GM10248 (cell line): ENCODE measurements at regions of chr13 and their contacts with region 1.

Region 1: DNA sequence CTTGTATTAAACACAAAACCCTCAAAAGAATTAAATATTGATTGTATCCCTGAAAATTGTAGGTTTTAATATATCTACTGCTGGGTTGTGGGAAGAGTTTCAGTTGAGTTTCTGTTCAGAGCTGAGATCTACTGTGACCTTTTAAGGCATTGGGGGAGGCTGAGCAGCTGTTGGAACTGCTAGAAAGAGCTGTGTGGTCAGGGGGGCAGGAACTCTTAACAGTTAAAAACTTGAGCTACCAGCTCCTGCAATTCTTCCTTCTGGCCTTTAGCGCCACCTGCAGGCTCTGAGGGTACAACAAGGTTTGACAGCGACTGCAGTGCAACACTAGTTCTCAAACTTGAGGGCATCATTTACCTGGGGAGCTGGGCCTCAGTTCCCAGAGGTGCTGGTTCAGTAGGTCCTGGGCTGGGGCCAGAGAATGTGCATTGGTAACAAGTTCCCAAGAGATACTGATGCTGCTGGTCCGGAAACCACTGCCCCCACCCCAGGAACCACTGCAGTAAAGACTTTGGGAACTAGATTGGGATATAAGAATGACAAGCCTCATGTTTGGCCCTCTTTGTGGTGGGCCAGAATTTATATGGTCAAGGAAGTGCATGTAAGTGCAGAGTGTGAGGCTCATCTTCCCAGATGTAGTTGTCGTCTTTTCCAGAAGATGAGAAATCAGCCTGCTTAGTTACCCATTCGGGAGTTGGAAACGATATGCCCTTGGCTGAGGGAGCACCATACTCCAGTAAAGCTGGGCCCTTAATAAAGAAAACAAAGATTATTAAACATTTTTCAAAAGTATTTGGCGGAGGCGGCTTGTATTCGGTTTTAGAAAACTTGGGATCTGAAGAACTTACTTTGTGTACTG is 2.6 kb downstream of the RNASEH2B start:
- DNase-seq: peak; percentile 79
- CTCF ChIP-seq: peak; percentile 84

Region 2: DNA sequence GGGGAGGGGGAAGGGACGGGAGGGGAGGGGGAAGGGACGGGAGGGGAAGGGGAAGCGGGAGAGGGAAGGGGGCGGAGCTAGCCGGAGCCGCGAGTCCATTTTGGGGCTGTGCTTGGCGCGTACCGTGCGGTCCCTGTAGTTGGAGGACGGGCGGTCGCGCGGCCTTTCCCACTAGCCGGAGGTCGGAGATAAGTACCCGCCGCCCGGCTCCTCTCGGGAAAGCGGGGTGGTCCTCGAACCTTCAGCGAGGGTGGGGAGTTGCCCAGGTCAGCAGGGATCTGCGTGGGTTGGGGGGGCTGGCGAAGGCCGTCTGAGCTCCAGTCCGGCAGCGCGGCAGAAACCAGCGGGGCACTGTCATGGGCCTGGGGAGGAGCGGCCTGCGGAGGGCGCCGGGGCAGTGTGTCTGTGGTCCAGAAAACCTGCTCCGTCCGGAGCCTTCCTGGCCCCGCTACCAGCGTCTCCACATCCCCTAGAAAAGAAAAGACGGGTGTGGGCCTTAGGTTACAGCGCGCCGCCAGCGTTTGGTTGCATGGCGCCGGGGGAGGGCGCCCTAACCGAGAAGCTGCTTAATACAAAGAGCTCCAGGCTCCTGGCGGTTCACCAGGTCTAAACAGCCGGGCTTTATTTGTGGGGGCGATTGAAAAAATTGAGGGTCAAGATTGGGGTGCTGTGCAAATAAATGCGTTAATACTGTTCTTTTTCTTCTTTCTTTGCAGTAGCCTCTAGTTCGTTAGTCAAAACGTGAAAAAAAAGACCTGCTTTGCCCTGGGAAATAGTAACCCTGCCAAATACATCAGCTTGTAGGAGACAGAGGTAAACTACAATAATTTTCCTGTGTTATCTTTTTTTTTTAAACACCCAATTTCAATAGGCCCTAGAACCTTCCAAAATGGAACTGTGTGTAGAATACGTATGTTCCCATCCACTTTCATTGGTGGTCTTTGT is 914.9 kb before region 1 on chr13 and contains the start of gene TRIM13:
- CTCF ChIA-PET with region 1: interaction called, 12 read pairs
- POLR2A ChIA-PET with region 1: interaction called, 6 read pairs
- DNase-seq: peak; percentile 76
- CTCF ChIP-seq: peak; percentile 76

Region 3: DNA sequence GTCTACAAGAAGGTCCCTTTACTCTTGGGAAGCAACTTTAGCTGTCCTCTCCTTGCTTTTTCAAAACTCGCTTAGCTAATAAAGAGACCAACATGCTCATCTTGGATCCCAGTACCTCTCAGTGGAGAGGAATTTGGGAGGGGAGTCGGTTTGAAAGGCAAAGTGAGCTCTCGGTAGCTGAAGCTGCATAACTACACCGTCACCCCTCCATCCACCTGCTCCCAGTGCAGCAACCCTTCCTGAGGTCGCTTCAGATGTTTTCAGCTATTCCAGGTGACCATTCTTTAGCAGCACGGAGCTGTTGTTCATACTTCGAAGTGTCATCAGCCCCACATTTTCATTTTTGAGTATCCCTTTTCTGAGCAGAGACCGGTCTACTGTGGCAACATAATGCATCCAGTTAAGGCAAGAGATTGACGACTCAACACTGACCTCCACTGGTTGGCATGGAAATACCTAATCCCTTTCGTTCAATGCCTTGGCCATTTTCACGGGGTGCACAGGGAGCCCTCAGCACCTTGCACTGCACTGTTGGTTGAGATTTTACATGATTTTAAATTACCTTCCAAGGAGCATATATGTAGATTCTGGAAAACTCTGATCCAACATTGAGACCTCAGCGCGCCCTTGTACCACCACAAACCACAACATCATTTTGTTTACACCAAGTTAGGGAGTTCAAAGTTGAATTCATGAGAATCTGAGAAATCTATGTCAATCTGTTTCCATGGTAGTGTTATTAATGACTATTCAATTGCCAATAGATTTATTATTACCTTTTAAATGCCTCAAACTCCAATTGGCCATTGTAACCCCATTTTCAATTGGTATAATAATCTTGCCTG is 110.9 kb before region 1 on chr13:
- CTCF ChIA-PET with region 1: interaction called, 24 read pairs
- POLR2A ChIA-PET with region 1: no interaction called
- DNase-seq: peak; percentile 58
- CTCF ChIP-seq: peak; percentile 80

Region 4: GRCh38 chr13:50898338-50898737 is 13.8 kb before region 1 on chr13:
- CTCF ChIA-PET with region 1: interaction called, 41 read pairs
- POLR2A ChIA-PET with region 1: no interaction called
- DNase-seq: no peak
- CTCF ChIP-seq: no peak

Region 5: GRCh38 chr13:50928659-50929462 is 16.7 kb after region 1 on chr13:
- CTCF ChIA-PET with region 1: interaction called, 19 read pairs
- POLR2A ChIA-PET with region 1: no interaction called
- DNase-seq: no peak
- CTCF ChIP-seq: no peak

Region 6: GRCh38 chr13:51475727-51476501 is 563.7 kb after region 1 on chr13:
- CTCF ChIA-PET with region 1: no interaction called
- POLR2A ChIA-PET with region 1: no interaction called
- DNase-seq: no peak
- CTCF ChIP-seq: no peak